ENCODE measurements at regions of chr2 and their contacts with region 1.

Region 1: DNA sequence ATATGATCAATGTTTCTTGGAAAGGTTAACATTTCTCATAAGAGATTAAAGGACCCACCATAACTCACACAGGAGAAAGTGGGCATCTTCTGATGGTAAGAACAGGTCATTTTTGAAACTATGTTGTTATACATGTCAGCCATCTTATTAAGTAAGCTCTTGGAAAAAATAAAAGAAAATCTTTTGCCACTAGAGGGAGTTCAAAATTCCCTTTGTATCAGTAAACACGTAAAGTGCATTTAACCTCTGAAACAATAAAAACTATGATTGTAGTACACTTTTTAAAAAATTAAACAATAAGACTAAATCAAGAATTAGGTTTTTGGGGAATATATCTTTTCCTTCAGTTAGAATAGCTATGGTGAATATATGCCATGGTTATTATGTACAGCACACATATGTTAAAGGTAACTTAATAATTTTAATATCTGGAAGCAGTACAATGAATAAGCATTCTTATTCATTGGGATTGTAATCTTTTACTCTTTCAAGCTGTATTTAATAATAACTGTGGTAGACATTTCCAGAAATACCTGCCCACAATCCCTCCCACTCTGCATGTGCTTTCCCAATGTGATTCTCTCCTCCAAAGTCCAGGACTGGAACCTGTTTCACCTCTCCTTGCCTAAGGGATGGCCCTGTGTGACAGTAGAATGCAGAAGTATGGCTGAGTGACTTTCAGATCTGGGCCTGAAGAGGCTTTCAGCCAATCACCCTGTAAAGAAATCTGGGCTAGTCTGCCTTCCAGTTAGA is 64.2 kb downstream of the RBMS1 start:
- DNase-seq: peak; percentile 89
- ATAC-seq: no peak
- H3K4me3 ChIP-seq: no peak overlapping the region
- H3K27ac ChIP-seq: 0 out of 2 replicates have a peak overlapping the region, but pooled peaks have one; percentile 1
- H3K4me1 ChIP-seq: peaks cover 31% of the 10 kb centered on the region
- H3K27me3 ChIP-seq: no peaks in the 10 kb centered on the region
- CTCF ChIP-seq: peak; percentile 81

Region 2: DNA sequence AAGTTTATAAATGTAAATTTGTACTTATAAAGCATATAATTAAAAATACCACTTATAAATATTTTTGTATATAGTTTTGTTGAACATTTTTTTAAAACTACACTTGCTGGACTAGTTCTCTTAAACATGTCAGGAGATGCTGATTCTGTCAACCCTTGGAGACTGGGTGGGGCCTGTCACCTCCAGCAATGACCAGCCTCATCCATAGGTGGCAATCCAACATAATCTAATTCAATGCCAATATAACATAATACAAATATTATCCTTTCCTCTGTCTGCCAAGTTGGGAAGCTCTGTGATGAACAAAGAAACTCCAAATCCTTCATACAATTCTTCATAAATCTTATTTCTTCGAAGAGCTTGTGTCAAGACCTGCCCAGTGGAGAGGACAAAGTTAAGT is 76.3 kb before region 1 on chr2:
- CTCF ChIA-PET with region 1: interaction called, 3 read pairs
- POLR2A ChIA-PET with region 1: no interaction called
- intact Hi-C with region 1: loop called (anchors 2 kb)
- DNase-seq: peak; percentile 49
- ATAC-seq: peak; percentile 27; the same call in 1 of the 2 replicates
- H3K4me3 ChIP-seq: no peak overlapping the region
- H3K27ac ChIP-seq: peak overlapping the region; percentile 21; the same call in 1 of the 2 replicates
- H3K4me1 ChIP-seq: peaks cover 53% of the 10 kb centered on the region
- H3K27me3 ChIP-seq: no peaks in the 10 kb centered on the region
- CTCF ChIP-seq: peak; percentile 63

Region 3: DNA sequence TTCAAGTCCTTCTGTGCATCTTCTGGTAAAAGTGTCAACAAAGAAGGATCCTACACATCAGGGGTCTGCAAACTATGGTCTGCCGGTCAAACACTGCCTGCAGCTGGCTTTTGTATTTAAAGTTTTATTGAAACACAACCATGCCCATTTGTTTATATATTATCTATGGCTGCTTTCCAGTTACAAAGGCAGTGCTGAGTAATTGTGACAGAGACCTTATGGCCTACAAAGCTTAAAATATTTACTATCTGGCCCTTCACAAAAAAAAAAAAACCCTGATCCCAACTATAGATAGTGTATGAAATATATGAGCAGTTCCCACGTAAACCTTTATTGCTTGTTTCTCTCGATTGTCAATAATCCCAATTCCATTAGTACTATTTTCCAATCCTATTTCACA is 37.2 kb before region 1 on chr2:
- CTCF ChIA-PET with region 1: no interaction called
- POLR2A ChIA-PET with region 1: no interaction called
- intact Hi-C with region 1: loop called (anchors 1 kb)
- DNase-seq: peak; percentile 71
- ATAC-seq: peak; percentile 16
- H3K4me3 ChIP-seq: peak overlapping the region; percentile 14; the same call in 1 of the 2 replicates
- H3K27ac ChIP-seq: peak overlapping the region; percentile 86
- H3K4me1 ChIP-seq: peaks cover 76% of the 10 kb centered on the region
- H3K27me3 ChIP-seq: no peaks in the 10 kb centered on the region
- CTCF ChIP-seq: no peak

Region 4: GRCh38 chr2:160582490-160583145 is 153.2 kb after region 1 on chr2:
- CTCF ChIA-PET with region 1: interaction called, 4 read pairs
- POLR2A ChIA-PET with region 1: no interaction called
- intact Hi-C with region 1: loop called (anchors 5 kb)
- DNase-seq: peak; percentile 42
- ATAC-seq: peak; percentile 53
- H3K4me3 ChIP-seq: no peak overlapping the region
- H3K27ac ChIP-seq: peak overlapping the region; percentile 38; the same call in 1 of the 2 replicates
- H3K4me1 ChIP-seq: peaks cover 15% of the 10 kb centered on the region
- H3K27me3 ChIP-seq: no peaks in the 10 kb centered on the region
- CTCF ChIP-seq: no peak

Region 5: DNA sequence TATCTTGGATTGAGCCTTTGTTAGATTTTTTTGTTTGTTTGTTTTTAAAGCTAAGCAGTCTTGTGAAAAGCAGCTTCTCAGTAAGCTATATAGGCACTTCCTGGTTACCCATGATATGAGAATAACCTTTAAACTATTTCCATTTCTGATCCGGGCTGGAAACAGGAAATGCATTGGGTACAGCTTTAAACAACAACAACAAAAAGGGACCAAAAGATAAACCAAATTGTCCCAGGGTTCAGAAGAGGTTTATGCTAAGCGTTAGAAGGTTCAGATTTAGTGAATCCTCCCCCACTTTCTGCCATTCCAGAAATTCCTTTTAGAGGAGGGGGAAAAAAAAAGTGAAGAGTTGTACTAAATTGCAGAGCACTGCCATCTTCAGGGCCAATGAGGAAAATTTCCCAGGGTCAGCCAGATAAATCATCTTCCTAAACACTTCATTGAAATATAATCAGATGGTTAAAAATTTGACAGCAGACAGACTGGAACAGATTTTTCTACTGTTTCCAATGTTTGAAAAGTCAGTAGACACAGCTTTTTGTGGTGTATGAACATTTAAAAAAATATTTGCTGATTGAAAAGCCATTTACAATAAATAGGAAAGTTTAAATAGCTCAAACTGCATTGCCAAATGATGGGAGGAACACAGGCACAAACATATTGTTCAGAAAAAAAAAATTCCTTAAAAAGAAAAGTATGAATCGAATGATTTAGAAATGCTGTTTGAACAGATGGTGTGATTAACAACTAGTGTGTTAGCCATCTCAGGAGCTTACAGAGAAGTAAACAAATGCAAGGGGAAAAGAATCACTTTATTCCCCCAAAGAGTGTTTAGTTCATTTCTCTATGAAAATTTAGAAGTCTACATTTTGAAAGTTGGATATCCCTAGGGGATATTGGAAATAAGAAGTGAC is 540.9 kb after region 1 on chr2:
- CTCF ChIA-PET with region 1: interaction called, 16 read pairs
- POLR2A ChIA-PET with region 1: no interaction called
- intact Hi-C with region 1: loop called (anchors 2 kb)
- DNase-seq: peak; percentile 87
- ATAC-seq: peak; percentile 70
- H3K4me3 ChIP-seq: peak overlapping the region; percentile 26; the same call in 1 of the 2 replicates
- H3K27ac ChIP-seq: peak overlapping the region; percentile 65
- H3K4me1 ChIP-seq: peaks cover 11% of the 10 kb centered on the region
- H3K27me3 ChIP-seq: no peaks in the 10 kb centered on the region
- CTCF ChIP-seq: peak; percentile 94

Region 6: DNA sequence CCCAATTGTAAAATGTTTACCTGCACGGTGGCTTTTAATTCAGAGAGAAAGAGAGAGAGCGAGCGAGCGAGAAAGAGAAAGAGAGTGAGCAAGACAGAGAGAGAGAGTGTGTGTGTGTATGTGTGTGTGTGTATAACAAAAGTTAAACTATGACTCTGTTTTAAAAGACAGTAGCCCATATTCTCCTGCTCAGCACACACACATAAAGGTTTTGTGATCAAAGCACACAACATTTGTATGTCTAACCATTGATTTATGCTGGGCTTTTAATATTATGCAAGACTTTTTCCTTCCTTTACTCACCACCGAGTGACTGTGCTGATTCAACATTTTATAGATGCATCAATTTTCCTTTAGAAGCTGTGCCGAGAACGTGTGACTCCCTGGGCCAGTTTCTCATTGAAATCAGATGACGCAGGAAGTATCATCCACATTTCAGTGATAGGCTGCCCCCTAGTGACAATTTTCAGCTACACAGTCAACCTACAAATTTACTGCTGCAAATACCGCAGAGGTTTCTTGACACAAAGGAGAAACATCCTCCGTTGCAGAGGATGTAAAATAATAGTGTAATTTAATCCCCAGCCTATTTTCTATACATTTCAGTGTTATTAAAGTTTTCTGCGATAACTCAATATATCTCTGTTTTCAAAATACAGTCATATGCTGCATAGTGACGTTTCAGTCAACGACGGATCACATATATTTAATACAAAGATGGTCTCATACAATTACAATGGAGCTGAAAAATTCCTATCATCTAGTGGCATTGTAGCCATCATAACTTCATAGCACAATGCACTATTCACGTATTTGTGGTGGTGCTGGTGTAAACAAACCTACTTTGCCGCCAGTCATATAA is 564.9 kb after region 1 on chr2:
- CTCF ChIA-PET with region 1: no interaction called
- POLR2A ChIA-PET with region 1: no interaction called
- intact Hi-C with region 1: loop called (anchors 5 kb)
- DNase-seq: peak; percentile 92
- ATAC-seq: peak; percentile 89
- H3K4me3 ChIP-seq: no peak overlapping the region
- H3K27ac ChIP-seq: no peak overlapping the region
- H3K4me1 ChIP-seq: peaks cover 7% of the 10 kb centered on the region
- H3K27me3 ChIP-seq: no peaks in the 10 kb centered on the region
- CTCF ChIP-seq: peak; percentile 94

Measured in PC-3 (cell line).